ENCODE measurements at regions of chr2 and their contacts with region 1.

Region 1: DNA sequence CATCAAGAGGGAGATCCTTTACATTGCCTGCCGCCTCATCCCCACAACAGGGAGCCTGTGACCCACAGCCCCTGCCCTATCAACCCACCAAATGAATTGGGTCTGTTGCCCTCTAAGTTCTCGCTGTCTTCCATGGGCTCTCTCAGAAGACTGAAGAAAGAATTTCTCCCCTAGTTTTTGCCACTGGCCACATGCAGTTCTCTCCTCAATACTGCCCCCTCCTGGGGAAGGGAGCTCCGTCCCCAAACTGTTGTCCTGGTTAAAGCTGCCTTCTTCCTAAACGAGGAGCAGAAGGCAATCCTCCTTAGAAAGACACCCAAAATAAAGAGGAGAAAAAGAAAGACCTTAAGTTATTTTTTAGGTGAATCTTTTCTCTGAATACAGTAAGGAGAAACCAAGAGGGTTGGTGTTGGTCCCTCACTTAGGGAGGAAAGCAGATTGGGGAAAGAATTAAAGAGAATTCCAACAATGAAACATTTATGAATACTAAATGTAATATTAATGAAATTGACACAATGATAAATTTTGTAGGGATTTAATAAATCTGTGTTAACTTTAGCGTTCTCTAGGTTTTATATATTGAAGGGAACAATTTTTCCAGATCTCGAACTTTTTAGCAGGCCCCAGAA is 31.1 kb upstream of the SATB2 start:
- DNase-seq: no peak
- H3K4me3 ChIP-seq: no peak overlapping the region
- H3K27me3 ChIP-seq: 0 out of 2 replicates have a peak, but pooled peaks cover 1% of the 10 kb centered on the region
- CTCF ChIP-seq: peak; percentile 92

Region 2: GRCh38 chr2:198309673-198310280 is 1179.1 kb before region 1 on chr2:
- CTCF ChIA-PET with region 1: interaction called, 185 read pairs
- POLR2A ChIA-PET with region 1: no interaction called
- DNase-seq: no peak
- H3K4me3 ChIP-seq: no peak overlapping the region
- H3K27me3 ChIP-seq: peaks cover 1% of the 10 kb centered on the region; the same call in 1 of the 2 replicates
- CTCF ChIP-seq: peak; percentile 89

Region 3: GRCh38 chr2:199019898-199020507 is 468.9 kb before region 1 on chr2:
- CTCF ChIA-PET with region 1: interaction called, 14 read pairs
- POLR2A ChIA-PET with region 1: no interaction called
- DNase-seq: peak; percentile 13
- H3K4me3 ChIP-seq: no peak overlapping the region
- H3K27me3 ChIP-seq: no peaks in the 10 kb centered on the region
- CTCF ChIP-seq: peak; percentile 75

Region 4: GRCh38 chr2:199471443-199472057 is 17.3 kb before region 1 on chr2:
- CTCF ChIA-PET with region 1: interaction called, 13 read pairs
- POLR2A ChIA-PET with region 1: no interaction called
- DNase-seq: no peak
- H3K4me3 ChIP-seq: no peak overlapping the region; the same call in 1 of the 2 replicates
- H3K27me3 ChIP-seq: peaks cover 46% of the 10 kb centered on the region
- CTCF ChIP-seq: peak; percentile 86

Region 5: GRCh38 chr2:199684168-199684567 is 195.3 kb after region 1 on chr2:
- CTCF ChIA-PET with region 1: no interaction called
- POLR2A ChIA-PET with region 1: no interaction called
- DNase-seq: no peak
- H3K4me3 ChIP-seq: no peak overlapping the region
- H3K27me3 ChIP-seq: no peaks in the 10 kb centered on the region
- CTCF ChIP-seq: no peak

Measured in BJ (cell line).